A549 (cell line): ENCODE measurements at regions of chr12 and their contacts with region 1.

Region 1: DNA sequence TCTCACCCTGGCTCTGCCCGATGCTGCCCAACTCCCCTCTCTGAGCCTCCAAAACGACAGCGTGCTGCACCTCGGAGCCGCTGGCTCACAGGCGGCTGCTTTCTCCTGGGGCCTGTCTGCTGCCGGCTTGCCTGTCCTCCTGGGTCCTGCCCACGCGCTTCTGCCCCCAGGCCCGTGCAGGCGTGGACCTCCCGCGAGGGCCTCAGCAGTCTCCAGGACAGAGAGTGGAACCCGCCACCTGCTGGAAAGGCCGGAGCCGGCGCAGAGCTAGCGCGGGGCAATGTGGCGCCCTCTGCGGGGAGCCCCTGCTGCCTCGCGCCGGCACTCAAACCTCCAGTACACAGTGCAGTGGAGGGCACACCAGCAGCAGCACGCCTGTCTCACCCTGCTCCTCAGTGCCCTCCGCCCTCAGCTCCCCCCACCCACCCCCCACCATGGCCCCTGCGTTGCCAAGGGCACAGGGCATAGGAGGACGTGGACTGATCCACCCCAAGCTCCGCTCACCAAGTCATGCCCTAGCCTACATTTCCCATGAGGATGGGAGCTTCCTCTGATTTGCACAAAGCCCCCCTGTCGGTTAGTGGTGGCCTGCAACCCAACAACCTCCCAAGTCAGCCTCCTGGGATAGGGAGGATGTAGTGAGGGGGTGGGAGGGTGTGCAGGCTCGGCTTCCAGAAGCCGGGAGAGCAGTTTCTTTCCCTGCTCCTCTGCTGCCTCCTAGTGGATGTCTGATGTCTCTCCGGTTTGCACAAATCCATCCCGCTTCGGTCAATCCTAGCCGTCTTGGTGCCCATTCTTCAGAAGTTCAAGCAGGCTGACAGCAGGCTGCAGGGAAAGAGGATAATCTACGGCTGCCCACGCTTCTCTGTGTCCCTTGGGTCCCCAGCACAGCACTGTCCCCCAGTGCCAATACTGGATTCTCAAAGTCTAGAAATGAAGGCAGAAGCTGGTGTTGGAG is 25.2 kb downstream of the KRT8 start:
- DNase-seq: peak; percentile 82 to 98
- ATAC-seq: peak; percentile 88 to 90
- H3K4me3 ChIP-seq: 0 out of 3 replicates have a peak overlapping the region, but pooled peaks have one; percentile 14
- H3K27ac ChIP-seq: peak overlapping the region; percentile 94 to 97
- H3K4me1 ChIP-seq: peaks cover 61% of the 10 kb centered on the region
- CTCF ChIP-seq: peak; percentile 97
- EP300 ChIP-seq: no peak
- POLR2A ChIP-seq: 0 out of 2 replicates have a peak, but pooled peaks have one; percentile 23
- RAD21 ChIP-seq: peak; percentile 90 to 99

Region 2: DNA sequence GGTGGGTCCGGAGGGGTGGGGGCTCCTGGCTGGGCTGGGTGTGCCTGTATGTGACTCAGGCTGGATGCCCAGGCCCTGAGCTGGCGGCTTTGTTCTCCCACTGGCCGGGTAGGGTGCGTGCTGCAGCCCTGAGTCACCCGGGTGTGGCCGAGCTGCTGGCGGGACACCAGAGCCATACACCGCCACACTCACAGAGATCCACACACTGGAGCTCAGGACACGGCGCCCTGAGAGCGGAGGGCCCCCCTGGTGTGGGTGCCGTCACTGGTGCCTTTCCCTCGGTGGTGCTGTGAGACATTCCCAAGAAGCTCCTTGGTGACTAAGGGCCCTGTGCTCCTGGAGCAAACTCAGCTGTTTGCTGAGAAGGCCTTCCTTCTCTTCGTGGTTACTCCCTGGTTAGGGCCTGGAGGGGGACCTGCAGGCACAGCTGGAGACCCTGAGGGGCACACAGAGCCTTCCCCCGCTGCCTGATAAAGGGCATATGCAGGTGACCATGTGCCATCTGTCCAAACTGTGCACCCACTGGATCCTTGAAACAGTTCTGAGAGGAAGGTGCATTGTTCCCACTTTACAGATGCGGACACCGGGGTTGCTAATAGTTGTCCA is 732.2 kb before region 1 on chr12:
- CTCF ChIA-PET with region 1: interaction called, 833 read pairs
- POLR2A ChIA-PET with region 1: interaction called, 28 read pairs
- DNase-seq: peak; percentile 96 to 100
- ATAC-seq: peak; percentile 46 to 71
- H3K4me3 ChIP-seq: no peak overlapping the region
- H3K27ac ChIP-seq: peak overlapping the region; percentile 100
- H3K4me1 ChIP-seq: peaks cover 93% of the 10 kb centered on the region
- CTCF ChIP-seq: no peak
- EP300 ChIP-seq: peak; percentile 97 to 99
- POLR2A ChIP-seq: no peak
- RAD21 ChIP-seq: peak in 1 of 2 experiments; percentile 42; a peak in 3 of 5 replicates

Region 3: GRCh38 chr12:52258335-52258901 is 621.3 kb before region 1 on chr12:
- CTCF ChIA-PET with region 1: interaction called, 24 read pairs
- POLR2A ChIA-PET with region 1: interaction called, 21 read pairs
- DNase-seq: no peak
- ATAC-seq: no peak; a peak in 1 of 6 replicates
- H3K4me3 ChIP-seq: no peak overlapping the region
- H3K27ac ChIP-seq: peak overlapping the region in 1 of 2 experiments; percentile 74; a peak in 3 of 6 replicates
- H3K4me1 ChIP-seq: peaks cover 60% of the 10 kb centered on the region
- CTCF ChIP-seq: no peak
- EP300 ChIP-seq: no peak
- POLR2A ChIP-seq: no peak
- RAD21 ChIP-seq: no peak

Region 4: DNA sequence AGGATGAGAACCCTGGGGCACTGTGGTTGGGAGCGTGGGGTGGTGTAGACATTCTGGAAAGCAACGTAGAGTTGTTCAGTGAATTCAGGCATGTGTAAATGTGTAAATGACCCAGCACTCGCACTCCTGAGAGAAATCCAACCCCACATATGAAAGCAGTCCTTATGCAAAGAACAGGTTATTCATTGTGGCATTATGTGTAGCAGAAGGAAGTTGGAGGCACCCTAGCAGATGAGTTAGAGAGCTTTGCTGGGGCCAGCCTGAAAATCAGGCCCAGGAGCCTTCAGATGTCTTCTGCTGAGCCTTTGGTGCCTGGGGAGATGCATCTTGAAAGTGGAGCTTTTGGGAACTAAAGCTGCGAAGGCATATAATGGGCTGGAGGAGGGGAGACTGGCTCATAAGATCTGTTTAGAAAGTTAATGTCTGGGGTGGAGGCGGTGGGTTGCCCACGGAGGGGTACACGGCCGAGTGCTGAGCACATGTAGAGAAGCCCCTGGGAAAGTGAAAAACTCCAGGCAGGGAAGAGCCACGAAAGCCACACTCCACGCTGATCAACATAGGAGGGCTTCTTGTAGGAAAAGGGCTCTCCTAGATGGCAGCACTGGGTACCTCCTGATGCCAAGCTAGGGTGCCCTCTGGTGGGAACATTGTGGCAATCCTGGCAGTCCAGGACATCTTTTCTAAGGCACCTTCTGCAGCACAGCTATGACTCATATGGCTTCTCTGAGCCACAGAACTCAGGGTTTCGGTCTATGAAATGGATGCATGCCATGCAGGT is 552.4 kb before region 1 on chr12:
- CTCF ChIA-PET with region 1: interaction called, 42 read pairs
- POLR2A ChIA-PET with region 1: no interaction called
- DNase-seq: peak; percentile 98 to 100
- ATAC-seq: peak; percentile 94 to 98
- H3K4me3 ChIP-seq: no peak overlapping the region
- H3K27ac ChIP-seq: peak overlapping the region; percentile 75 to 90
- H3K4me1 ChIP-seq: peaks cover 19% of the 10 kb centered on the region
- CTCF ChIP-seq: peak; percentile 100
- EP300 ChIP-seq: no peak; a peak in 1 of 5 replicates
- POLR2A ChIP-seq: no peak
- RAD21 ChIP-seq: peak; percentile 95 to 96

Region 5: DNA sequence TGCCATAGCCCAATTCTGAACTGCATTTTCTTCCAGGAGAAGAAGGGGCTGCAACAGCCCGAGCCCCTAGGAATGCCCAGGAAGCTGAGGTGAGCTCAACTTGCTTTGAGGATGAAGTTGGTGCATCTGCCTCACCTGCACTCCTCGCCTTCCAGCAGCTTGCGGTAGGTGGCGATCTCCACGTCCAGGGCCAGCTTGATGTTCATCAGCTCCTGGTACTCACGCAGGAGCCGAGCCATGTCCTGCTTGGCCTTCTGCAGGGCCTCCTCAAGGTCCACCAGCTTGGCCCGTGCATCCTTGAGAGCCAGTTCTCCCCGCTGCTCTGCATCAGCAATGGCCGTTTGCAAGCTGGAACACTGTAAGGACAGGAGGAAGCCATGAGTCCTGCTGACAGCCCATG is 451.6 kb before region 1 on chr12:
- CTCF ChIA-PET with region 1: interaction called, 12 read pairs
- POLR2A ChIA-PET with region 1: no interaction called
- DNase-seq: no peak
- ATAC-seq: peak in 1 of 2 experiments; percentile 45; a peak in 3 of 6 replicates
- H3K4me3 ChIP-seq: no peak overlapping the region
- H3K27ac ChIP-seq: no peak overlapping the region
- H3K4me1 ChIP-seq: no peaks in the 10 kb centered on the region
- CTCF ChIP-seq: no peak
- EP300 ChIP-seq: no peak
- POLR2A ChIP-seq: no peak
- RAD21 ChIP-seq: 0 out of 5 replicates have a peak, but pooled peaks of 1 of the 2 experiments have one; percentile 12

Region 6: DNA sequence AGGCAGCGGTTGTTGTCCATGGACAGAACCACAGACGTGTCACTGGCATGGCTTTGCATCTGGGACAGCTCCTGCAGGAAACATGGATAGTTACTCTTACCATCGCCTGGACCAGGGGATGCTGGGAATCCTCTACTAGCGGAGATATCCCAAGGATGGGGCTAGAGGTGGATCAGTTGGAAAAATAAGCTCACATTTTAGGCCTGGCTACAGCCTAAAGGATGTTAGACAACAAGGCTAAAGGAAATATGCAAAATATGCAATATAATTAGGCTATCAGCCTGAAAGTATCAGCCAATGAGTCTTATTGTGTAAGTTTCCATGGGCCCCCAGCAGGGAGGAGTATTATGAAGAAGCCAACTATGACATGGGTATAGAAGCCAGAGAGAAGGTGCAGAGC is 107.5 kb before region 1 on chr12:
- CTCF ChIA-PET with region 1: no interaction called
- POLR2A ChIA-PET with region 1: no interaction called
- DNase-seq: no peak
- ATAC-seq: no peak
- H3K4me3 ChIP-seq: no peak overlapping the region
- H3K27ac ChIP-seq: no peak overlapping the region
- H3K4me1 ChIP-seq: no peaks in the 10 kb centered on the region
- CTCF ChIP-seq: no peak
- EP300 ChIP-seq: no peak
- POLR2A ChIP-seq: no peak
- RAD21 ChIP-seq: no peak

Region 7: DNA sequence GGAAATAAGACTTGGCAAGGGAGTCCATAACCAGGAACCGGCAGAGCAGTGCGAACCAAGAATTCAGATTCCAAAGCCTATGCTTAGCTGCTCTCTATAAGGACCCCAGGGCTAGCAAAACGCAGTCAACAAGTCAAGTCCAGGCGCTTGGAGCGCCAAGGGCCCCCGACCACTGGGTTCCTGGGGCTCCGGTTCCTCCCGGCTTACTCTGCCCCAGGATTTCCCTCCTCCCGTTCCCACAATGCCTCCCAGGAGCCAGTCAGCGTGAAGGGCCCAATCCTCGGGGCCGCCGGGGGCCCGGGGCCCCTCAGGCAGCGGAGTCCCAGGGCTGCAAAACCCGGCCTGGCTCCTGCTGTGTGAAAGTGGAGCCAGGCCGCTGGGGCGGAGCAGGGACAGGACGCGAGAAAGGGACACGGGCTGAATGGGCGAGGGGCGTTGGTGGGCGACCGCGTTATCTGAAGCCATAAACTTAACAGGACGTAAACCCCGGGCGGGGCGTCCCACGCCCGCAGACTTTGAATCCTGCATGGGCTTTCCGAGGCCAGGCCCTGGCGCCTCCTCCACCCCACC is 23.7 kb after region 1 on chr12:
- CTCF ChIA-PET with region 1: interaction called, 440 read pairs
- POLR2A ChIA-PET with region 1: interaction called, 18 read pairs
- DNase-seq: peak; percentile 50 to 69
- ATAC-seq: peak; percentile 26 to 39; a peak in 5 of 6 replicates
- H3K4me3 ChIP-seq: peak overlapping the region; percentile 87
- H3K27ac ChIP-seq: peak overlapping the region; percentile 91 to 99
- H3K4me1 ChIP-seq: peaks cover 72% of the 10 kb centered on the region
- CTCF ChIP-seq: no peak
- EP300 ChIP-seq: no peak
- POLR2A ChIP-seq: peak; percentile 9; the same call in 1 of the 2 replicates
- RAD21 ChIP-seq: 0 out of 5 replicates have a peak, but pooled peaks of 1 of the 2 experiments have one; percentile 2